K562 (cell line): ENCODE measurements at regions of chr15 and their contacts with region 1.

Region 1: GRCh38 chr15:42056934-42057779 is 36.3 kb upstream of the PLA2G4E start:
- DNase-seq: peak; percentile 40 to 69 (median 58)
- ATAC-seq: peak; percentile 96
- H3K4me3 ChIP-seq: peak overlapping the region; percentile 28
- H3K27ac ChIP-seq: no peak overlapping the region
- H3K4me1 ChIP-seq: peaks cover 0 to 6% of the 10 kb centered on the region in 2 experiments; a peak in 3 of 5 replicates
- H3K27me3 ChIP-seq: peaks cover 20 to 42% of the 10 kb centered on the region in 2 experiments
- CTCF ChIP-seq: peak; percentile 65 to 78 (median 72)
- EP300 ChIP-seq: no peak
- POLR2A ChIP-seq: no peak
- RAD21 ChIP-seq: peak; percentile 65 to 78

Region 2: DNA sequence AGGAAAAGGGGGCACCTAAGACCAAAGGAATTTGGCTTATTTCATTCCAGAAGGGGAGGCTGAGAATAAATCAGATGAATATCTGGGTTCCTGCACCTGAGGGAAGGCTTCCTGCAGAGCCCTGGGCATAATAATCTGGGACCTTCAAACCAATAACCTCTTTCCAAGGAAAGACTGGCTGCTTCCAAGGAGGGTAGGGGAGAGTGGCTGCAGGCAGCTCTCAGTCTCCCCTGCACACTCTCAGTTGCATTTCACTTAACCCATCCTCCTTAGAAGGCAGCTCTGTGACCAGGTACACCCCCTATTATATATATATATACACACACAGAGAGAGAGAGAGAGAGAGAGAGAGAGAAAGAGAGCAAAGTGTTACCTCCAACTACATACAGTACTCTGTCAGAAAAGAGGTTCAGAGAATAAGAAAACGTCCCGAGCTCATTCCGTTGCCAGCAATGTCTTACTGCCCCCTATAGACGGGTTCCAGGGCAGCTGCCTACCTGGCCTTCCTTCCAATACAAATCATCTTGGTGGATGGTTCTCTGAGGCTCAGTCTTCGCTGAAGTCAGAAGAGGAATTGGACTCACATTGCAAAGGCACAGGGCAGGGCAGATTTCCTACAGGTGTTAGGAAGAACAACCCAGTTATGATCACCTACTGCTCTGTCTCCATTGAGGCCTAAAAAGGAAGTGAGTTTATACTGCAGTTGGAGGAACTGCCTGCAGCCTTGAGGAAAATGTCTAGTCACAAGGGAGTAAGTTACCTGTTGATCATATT is 328.2 kb after region 1 on chr15:
- CTCF ChIA-PET with region 1: no interaction called
- POLR2A ChIA-PET with region 1: interaction called, 3 read pairs
- in situ Hi-C with region 1: no loop called
- intact Hi-C with region 1: loop called (anchors 10 kb)
- DNase-seq: peak; percentile 67 to 78 (median 72)
- ATAC-seq: peak; percentile 94
- H3K4me3 ChIP-seq: no peak overlapping the region
- H3K27ac ChIP-seq: no peak overlapping the region
- H3K4me1 ChIP-seq: peaks cover 15 to 16% of the 10 kb centered on the region in 2 experiments; a peak in 4 of 5 replicates
- H3K27me3 ChIP-seq: peaks cover 0 to 6% of the 10 kb centered on the region in 2 experiments; a peak in 2 of 5 replicates
- CTCF ChIP-seq: peak; percentile 84 to 92 (median 91)
- EP300 ChIP-seq: no peak
- POLR2A ChIP-seq: no peak
- RAD21 ChIP-seq: peak; percentile 63 to 82

Region 3: GRCh38 chr15:42608110-42608531 is 551.0 kb after region 1 on chr15:
- CTCF ChIA-PET with region 1: no interaction called
- POLR2A ChIA-PET with region 1: no interaction called
- in situ Hi-C with region 1: no loop called
- intact Hi-C with region 1: no loop called
- DNase-seq: peak in 1 of 4 experiments; percentile 52
- ATAC-seq: peak; percentile 42
- H3K4me3 ChIP-seq: no peak overlapping the region
- H3K27ac ChIP-seq: no peak overlapping the region
- H3K4me1 ChIP-seq: peaks cover 13 to 32% of the 10 kb centered on the region in 2 experiments; a peak in 4 of 5 replicates
- H3K27me3 ChIP-seq: no peaks in the 10 kb centered on the region
- CTCF ChIP-seq: no peak
- EP300 ChIP-seq: no peak
- POLR2A ChIP-seq: no peak
- RAD21 ChIP-seq: no peak